ENCODE measurements at regions of chr15 and their contacts with region 1.

Region 1: DNA sequence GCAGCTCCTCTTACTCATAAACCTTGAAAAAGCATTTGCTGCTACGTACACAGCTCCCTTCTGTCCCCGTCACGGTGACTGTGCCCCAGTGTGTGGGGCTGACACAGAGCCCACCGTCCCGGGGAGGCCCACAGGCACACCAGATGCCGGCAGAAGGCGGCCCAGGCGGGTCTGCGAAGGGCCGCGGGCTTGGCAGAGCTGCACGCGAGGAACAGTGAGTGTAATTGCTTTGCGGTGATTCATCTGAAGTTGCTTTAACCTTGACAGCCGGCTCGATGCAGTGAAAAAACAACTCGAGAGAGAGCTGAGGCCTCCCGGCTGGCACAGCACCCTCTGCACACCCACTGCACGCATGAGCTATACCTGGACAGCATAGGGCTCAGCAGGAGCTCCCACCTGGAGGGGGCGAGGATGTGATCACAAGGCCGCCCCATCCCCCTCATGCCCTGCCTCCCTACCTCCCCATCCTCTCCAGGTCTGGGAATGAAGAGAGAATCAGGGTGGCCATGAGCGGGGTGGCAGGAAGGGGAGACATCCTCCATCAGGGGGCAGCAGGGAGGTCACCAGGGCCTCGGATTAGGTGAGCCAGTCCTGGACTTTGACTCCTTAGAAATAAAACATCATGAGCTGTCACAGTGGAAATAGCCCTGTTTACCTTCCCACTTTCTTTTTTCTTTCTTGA is 172.7 kb downstream of the MEGF11 start:
- DNase-seq: no peak
- H3K4me3 ChIP-seq: no peak overlapping the region
- H3K27ac ChIP-seq: no peak overlapping the region
- H3K4me1 ChIP-seq: no peaks in the 10 kb centered on the region
- H3K27me3 ChIP-seq: peaks cover 0 to 24% of the 10 kb centered on the region in 2 donors
- CTCF ChIP-seq: no peak
- POLR2A ChIP-seq: no peak

Region 2: GRCh38 chr15:65476903-65477302 is 604.0 kb before region 1 on chr15:
- intact Hi-C with region 1: no loop called
- DNase-seq: no peak
- H3K4me3 ChIP-seq: no peak overlapping the region
- H3K27ac ChIP-seq: no peak overlapping the region
- H3K4me1 ChIP-seq: no peaks in the 10 kb centered on the region
- H3K27me3 ChIP-seq: no peaks in the 10 kb centered on the region
- CTCF ChIP-seq: no peak
- POLR2A ChIP-seq: no peak

Region 3: DNA sequence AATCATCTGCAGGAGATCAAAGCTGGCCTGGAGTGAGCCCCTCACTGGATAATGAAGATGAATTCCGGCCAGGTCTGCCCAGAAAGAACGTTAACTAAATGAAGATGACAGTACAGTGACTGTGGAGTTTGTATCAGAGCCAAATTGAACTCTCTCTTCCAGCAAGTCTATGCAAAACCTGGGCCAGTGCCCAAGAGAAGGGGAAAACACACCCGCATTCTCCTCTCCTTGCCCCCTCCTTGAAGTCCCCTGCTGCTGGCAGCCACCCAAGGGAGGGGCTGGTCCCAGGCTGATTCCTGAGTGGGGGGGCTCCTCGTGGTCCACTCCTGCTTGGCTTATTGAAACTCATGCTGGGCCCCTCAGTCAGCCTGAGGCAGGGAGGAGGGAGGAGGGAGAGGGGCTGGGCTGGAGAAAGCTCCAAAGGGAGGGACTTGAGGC is 55.8 kb before region 1 on chr15:
- intact Hi-C with region 1: no loop called
- DNase-seq: no peak
- H3K4me3 ChIP-seq: no peak overlapping the region
- H3K27ac ChIP-seq: no peak overlapping the region
- H3K4me1 ChIP-seq: no peaks in the 10 kb centered on the region
- H3K27me3 ChIP-seq: no peaks in the 10 kb centered on the region
- CTCF ChIP-seq: no peak
- POLR2A ChIP-seq: no peak

Region 4: DNA sequence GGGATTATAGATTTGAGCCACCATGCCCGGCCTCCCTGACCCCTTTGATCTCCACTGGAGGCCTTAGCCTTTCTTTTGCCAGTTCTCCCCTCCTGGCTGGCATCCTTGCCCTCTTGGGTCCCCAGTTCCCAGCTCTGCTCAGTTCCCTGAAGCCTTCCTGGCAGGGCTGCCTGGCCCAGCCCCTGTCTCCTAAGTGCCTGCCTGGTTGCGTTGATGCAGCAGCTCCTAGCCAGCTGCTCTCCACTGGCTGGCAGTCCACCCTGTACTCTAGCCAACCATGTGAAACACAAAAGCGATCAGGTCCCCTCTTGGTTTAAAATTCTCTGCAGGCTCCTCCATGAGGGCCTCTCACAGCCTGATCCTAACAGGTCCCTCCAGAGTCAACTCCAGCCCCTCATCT is 26.9 kb before region 1 on chr15:
- intact Hi-C with region 1: loop called (anchors 2 kb)
- DNase-seq: no peak
- H3K4me3 ChIP-seq: no peak overlapping the region
- H3K27ac ChIP-seq: no peak overlapping the region
- H3K4me1 ChIP-seq: no peaks in the 10 kb centered on the region
- H3K27me3 ChIP-seq: no peaks in the 10 kb centered on the region
- CTCF ChIP-seq: no peak
- POLR2A ChIP-seq: no peak